ENCODE measurements at regions of chr12 and their contacts with region 1.

Region 1: GRCh38 chr12:39574785-39575492 is 44.7 kb downstream of the ABCD2 start:
- DNase-seq: no peak
- ATAC-seq: no peak
- H3K4me3 ChIP-seq: no peak overlapping the region
- H3K27ac ChIP-seq: no peak overlapping the region
- H3K4me1 ChIP-seq: no peaks in the 10 kb centered on the region
- H3K27me3 ChIP-seq: no peaks in the 10 kb centered on the region
- CTCF ChIP-seq: no peak
- EP300 ChIP-seq: no peak
- POLR2A ChIP-seq: no peak
- RAD21 ChIP-seq: no peak

Region 2: DNA sequence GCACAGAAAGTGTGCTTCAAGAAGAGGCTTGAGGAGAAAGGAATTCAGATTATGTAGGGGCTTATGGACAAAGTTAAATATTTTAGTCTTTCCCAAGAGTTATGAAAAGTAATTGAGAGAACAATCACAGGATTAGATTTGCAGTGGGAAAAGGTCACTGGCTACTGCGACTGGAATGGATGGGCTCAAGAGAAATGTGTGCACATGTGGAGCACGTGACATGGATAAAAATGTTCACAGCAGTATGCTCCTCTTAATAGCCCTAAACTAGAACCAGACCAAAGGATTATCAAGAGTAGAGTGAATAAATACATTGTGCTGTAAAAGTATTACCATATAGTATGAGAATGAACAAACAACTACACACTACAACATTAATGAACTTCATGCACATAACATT is 33.5 kb before region 1 on chr12:
- CTCF ChIA-PET with region 1: no interaction called
- POLR2A ChIA-PET with region 1: no interaction called
- in situ Hi-C with region 1: no loop called
- intact Hi-C with region 1: loop called (anchors 1 kb)
- DNase-seq: no peak
- ATAC-seq: no peak
- H3K4me3 ChIP-seq: no peak overlapping the region
- H3K27ac ChIP-seq: no peak overlapping the region
- H3K4me1 ChIP-seq: no peaks in the 10 kb centered on the region
- H3K27me3 ChIP-seq: no peaks in the 10 kb centered on the region
- CTCF ChIP-seq: no peak
- EP300 ChIP-seq: no peak
- POLR2A ChIP-seq: no peak
- RAD21 ChIP-seq: no peak

Measured in HepG2 (cell line).